ENCODE measurements at regions of chr3 and their contacts with region 1.

Region 1: DNA sequence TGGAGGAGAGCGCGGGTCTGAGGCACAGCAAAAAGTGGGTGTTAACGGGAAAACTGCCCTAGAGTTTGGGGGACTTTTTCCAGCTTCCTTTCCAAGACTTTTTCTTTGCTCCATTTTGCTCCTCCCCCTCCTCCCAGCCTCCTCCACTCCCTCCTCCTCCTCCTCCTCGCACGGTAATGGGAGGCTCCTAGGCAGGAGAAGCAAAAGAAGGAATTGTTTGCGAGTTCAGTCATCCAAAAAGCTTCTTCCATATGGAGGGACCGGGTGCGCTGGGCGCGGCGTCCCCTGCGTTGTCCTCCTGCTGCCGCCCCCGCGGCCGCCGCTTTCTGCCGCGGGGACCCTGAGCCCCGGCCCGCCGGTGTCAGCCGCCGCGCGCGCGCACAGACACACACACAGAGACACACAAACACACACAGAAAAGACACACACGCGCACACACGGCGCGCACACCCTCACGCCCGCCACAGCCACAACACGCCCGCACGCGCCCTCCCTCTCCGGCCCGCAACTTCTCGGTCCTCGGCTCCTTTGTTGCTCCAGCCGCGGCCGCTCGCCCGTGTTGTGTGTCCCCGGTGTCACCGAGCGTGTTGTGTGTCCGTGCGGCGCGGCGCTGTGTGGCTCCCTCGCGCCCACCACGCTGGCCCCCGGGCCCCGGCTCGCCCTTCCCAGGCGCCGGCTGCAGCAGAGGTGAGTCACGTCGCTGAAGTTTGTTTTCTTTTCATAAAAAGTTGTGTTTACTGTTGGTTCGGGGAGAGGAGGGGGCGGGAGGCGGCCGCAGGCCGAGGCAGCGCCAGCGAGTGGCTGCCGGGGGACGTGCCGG is at the start of gene BOC:
- DNase-seq: peak; percentile 43 to 65
- ATAC-seq: peak; percentile 53 to 69 (median 61)
- H3K4me3 ChIP-seq: peak within 1 kb of the TSS; percentile 70
- H3K27ac ChIP-seq: peak within 1 kb of the TSS; percentile 48
- H3K4me1 ChIP-seq: no peaks in the 10 kb centered on the region
- H3K27me3 ChIP-seq: peaks cover 0 to 53% (median 11%) of the 10 kb centered on the region in 3 donors
- CTCF ChIP-seq: no peak
- total RNA-seq, gene BOC: 3.6 to 15.4 (median 4.6) TPM

Region 2: DNA sequence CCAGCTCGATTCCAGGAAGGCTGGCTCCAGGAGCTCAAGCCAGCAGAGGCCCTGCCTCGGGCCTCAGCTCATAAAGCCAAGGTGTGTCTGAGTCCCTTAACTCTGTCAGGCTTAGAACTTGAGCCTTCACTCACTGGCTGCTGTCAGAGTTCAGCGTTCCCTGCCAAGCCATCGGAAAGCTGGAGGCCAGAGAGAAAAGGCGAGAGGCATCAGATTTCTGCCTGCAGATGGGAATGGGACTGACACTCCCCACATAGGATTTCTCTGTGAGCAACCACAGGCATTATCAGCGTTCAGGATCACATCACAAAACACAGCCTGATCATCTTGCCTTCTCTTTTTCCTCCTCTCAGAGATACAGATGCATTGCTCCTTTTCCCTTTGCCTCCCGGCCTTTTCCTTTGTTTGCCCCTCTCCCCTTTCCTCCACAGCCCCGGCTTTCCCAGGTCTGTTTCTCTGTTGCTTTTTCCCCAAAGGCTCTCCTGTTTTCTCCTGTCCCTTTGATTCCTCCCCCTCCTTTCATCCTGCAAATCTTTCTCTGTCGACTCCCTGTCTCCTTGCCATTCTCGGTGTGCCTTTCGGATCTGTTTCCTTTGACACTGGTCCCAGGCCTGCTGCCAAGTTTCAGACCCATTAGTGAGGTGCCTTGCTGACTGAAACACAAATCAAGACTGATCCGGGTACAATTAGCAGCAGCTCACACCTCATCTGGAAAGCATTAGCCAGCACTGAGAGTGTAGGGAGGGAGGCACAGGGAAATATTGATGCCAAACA is 44.6 kb before region 1 on chr3:
- intact Hi-C with region 1: loop called in 1 of 2 experiments (anchors 5 kb)
- DNase-seq: peak; percentile 29 to 59
- ATAC-seq: peak; percentile 61 to 87 (median 82)
- H3K4me3 ChIP-seq: peak overlapping the region; percentile 11
- H3K27ac ChIP-seq: peak overlapping the region; percentile 68
- H3K4me1 ChIP-seq: peaks cover 18% of the 10 kb centered on the region
- H3K27me3 ChIP-seq: no peaks in the 10 kb centered on the region
- CTCF ChIP-seq: no peak

Region 3: GRCh38 chr3:113264283-113265131 is 53.0 kb after region 1 on chr3:
- intact Hi-C with region 1: loop called in 1 of 2 experiments (anchors 5 kb)
- DNase-seq: peak in 1 of 2 donors; percentile 46
- ATAC-seq: peak; percentile 70 to 86 (median 82)
- H3K4me3 ChIP-seq: no peak overlapping the region
- H3K27ac ChIP-seq: no peak overlapping the region
- H3K4me1 ChIP-seq: peaks cover 29% of the 10 kb centered on the region
- H3K27me3 ChIP-seq: no peaks in the 10 kb centered on the region
- CTCF ChIP-seq: no peak

Region 4: DNA sequence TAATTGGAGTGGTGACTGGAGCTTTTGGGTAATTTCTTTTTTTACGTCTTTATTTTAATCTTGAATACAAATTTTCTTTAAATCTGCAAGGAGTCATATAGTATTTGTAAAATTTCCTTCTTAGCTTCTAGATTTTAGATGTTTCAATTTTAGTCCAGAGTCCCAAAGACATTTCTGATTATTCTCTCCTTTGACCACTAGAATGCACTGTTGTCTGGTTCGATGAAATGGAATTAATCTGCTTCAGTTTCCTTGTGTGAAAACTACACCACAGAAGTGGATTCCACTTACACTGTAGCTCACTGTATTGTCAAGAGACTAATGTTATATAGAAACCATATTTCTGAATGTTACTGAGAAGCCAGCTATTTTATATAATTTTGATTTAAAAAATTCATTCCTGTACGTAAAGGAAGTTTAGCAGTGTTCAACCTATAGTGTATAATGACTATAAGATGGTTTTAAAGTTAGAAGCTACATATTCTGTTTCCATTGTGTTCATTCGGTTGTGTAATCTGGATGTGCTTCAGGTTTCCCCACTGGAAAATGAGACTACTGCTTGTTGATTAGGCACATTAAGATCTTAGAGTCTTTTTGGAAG is 633.2 kb after region 1 on chr3:
- intact Hi-C with region 1: no loop called
- DNase-seq: no peak
- ATAC-seq: peak in 1 of 4 donors; percentile 55
- H3K4me3 ChIP-seq: no peak overlapping the region
- H3K27ac ChIP-seq: no peak overlapping the region
- H3K4me1 ChIP-seq: no peaks in the 10 kb centered on the region
- H3K27me3 ChIP-seq: no peaks in the 10 kb centered on the region
- CTCF ChIP-seq: peak; percentile 53